ENCODE measurements at regions of chr13 and their contacts with region 1.

Region 1: DNA sequence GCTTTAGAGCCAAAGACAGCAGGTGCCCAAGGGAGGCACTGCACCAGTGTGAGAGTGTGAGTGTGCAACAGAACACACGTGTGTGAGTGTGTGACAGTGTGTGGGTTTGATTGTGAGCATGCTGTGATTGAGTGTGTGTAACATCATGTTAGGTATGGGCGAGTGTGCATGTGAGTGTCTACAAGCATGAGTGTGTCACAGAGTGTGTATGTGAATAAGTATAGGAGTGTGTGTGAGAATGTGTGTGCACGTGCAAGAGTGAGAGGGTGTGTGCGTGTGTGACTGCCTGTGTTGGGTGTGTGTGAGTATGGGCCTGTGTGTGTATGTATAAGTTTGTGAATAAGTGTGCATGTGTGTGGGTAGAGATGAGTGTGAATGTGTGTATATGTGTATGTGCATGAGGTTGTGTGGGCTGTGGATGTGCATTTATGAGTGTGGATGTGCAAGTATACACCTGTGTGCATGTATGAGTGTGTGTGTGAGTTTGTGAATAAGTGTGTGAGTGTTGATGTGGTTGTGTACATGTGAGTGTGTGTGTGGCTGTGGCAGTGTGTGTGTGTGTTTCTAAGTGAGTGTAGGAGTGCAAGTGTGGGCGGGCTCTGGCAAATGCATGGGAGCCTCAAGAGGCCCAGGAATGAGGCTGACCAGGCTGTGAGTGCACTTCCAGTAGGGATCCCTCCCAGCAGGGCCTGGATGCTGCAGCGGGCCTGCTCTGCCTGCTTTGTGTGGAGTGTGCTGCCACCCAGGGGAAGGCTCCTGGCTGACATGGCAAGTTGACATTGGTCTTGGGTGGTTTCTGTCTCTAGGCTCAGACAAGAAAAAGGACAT is 198.4 kb downstream of the COL4A1 start:
- DNase-seq: peak; percentile 78
- H3K4me3 ChIP-seq: no peak overlapping the region
- H3K27ac ChIP-seq: no peak overlapping the region
- H3K4me1 ChIP-seq: peaks cover 29% of the 10 kb centered on the region
- H3K27me3 ChIP-seq: no peaks in the 10 kb centered on the region
- CTCF ChIP-seq: peak; percentile 89 to 93

Region 2: GRCh38 chr13:109275852-109276251 is 832.7 kb before region 1 on chr13:
- CTCF ChIA-PET with region 1: no interaction called
- dilution Hi-C with region 1: loop called (anchors 10 kb)
- in situ Hi-C with region 1: loop called (anchors 10 to 25 kb)
- intact Hi-C with region 1: loop called (anchors 5 kb)
- DNase-seq: peak; percentile 40
- H3K4me3 ChIP-seq: no peak overlapping the region
- H3K27ac ChIP-seq: no peak overlapping the region
- H3K4me1 ChIP-seq: peaks cover 26% of the 10 kb centered on the region
- H3K27me3 ChIP-seq: no peaks in the 10 kb centered on the region
- CTCF ChIP-seq: peak; percentile 39 to 52

Region 3: GRCh38 chr13:109764470-109765291 is 343.9 kb before region 1 on chr13:
- CTCF ChIA-PET with region 1: no interaction called
- dilution Hi-C with region 1: loop called (anchors 5 kb)
- in situ Hi-C with region 1: no loop called
- intact Hi-C with region 1: no loop called
- DNase-seq: peak; percentile 59
- H3K4me3 ChIP-seq: no peak overlapping the region
- H3K27ac ChIP-seq: no peak overlapping the region
- H3K4me1 ChIP-seq: peaks cover 45% of the 10 kb centered on the region
- H3K27me3 ChIP-seq: no peaks in the 10 kb centered on the region
- CTCF ChIP-seq: peak; percentile 25 to 37

Region 4: DNA sequence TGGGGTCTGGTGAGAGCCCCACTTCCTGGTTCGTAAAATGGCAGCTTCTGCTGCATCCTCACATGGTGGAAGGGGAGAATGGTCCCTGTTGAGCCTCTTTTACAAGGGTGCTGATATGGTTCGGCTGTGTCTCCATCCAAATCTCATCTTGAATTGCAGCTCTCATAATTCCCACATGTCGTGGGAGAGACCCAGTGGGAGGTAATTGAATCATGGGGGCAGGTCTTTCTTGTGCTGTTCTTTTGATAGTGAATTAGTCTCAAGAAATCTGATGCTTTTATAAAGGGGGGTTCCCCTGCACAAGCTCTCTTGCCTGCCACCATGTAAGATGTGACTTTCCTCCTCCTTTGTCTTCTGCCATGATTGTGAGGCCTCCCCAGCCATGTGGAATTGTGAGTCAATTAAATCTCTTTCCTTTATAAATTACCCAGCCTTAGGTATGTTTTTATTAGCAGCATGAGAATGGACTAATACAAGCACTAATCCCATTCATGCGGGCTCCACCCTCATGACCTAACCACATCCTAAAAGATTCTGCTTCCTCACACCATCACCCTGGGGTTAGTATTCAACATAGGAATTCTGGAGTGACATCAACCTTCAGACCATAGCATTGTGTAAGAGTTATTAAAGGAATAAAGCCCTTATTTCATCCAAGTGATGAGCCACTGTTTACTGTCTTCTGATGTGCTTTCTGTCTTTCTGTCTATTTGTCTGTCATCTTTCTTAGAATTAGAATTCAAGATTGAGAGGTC is 163.2 kb before region 1 on chr13:
- CTCF ChIA-PET with region 1: no interaction called
- dilution Hi-C with region 1: loop called (anchors 5 kb)
- in situ Hi-C with region 1: no loop called
- intact Hi-C with region 1: loop called (anchors 2 kb)
- DNase-seq: peak; percentile 96
- H3K4me3 ChIP-seq: no peak overlapping the region
- H3K27ac ChIP-seq: peak overlapping the region; percentile 74
- H3K4me1 ChIP-seq: peaks cover 11% of the 10 kb centered on the region
- H3K27me3 ChIP-seq: no peaks in the 10 kb centered on the region
- CTCF ChIP-seq: no peak

Region 5: GRCh38 chr13:110070511-110071120 is 37.9 kb before region 1 on chr13:
- CTCF ChIA-PET with region 1: no interaction called
- dilution Hi-C with region 1: loop called (anchors 5 kb)
- in situ Hi-C with region 1: no loop called
- intact Hi-C with region 1: loop called (anchors 2 kb)
- DNase-seq: peak; percentile 88
- H3K4me3 ChIP-seq: no peak overlapping the region
- H3K27ac ChIP-seq: peak overlapping the region; percentile 91
- H3K4me1 ChIP-seq: peaks cover 19% of the 10 kb centered on the region
- H3K27me3 ChIP-seq: no peaks in the 10 kb centered on the region
- CTCF ChIP-seq: no peak